Activated CD8-positive, alpha-beta T cell treated with anti-CD3 and anti-CD28 coated beads for 36 hours (primary cell): ENCODE measurements at regions of chr5 and their contacts with region 1.

Region 1: DNA sequence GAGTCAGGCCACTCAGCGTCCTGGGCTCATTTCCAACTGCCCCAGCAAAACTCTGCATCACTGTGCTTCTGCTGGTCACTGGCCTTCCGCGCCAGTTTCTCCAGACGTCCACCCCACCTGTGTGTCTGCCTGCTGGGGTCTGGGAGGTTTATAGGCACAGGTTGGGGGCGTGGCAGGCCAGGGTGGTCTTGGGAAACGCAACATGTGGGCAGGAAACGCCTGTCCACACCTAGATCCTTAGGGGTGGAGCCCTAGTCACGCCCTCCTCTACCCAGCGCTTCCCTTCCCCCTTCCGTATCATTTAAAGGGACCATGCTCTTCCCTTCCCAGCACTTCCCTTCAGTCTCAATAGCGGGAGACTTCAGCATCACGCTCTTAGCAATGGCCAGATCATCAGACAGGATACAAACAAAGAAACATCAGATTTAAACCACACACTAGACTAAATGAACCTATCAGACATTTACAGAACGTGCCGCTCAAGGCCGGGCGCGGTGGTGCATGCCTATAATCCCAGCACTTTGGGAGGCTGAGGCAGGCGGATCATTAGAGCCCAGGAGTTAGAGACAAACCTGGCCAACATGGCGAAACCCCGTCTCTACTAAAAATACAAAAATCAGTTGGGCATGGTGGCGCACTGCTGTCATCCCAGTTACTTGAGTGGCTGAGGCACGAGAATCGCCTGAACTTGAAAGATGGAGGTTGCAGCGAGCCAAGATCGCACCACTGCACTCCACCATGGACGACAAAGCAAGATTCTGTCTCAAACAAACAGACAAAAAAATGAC is 11.8 kb upstream of the BTNL9 start:
- DNase-seq: no peak
- ATAC-seq: no peak
- H3K4me3 Mint-ChIP-seq: no peak overlapping the region
- H3K27ac Mint-ChIP-seq: no peak overlapping the region
- H3K4me1 Mint-ChIP-seq: no peaks in the 10 kb centered on the region
- H3K27me3 Mint-ChIP-seq: peaks cover 29% of the 10 kb centered on the region
- CTCF ChIP-seq: no peak

Region 2: GRCh38 chr5:180873615-180874520 is 154.4 kb before region 1 on chr5:
- CTCF ChIA-PET with region 1: no interaction called
- POLR2A ChIA-PET with region 1: no interaction called
- intact Hi-C with region 1: loop called (anchors 10 kb)
- DNase-seq: peak; percentile 20
- ATAC-seq: peak; percentile 69
- H3K4me3 Mint-ChIP-seq: no peak overlapping the region
- H3K27ac Mint-ChIP-seq: no peak overlapping the region
- H3K4me1 Mint-ChIP-seq: peaks cover 4% of the 10 kb centered on the region
- H3K27me3 Mint-ChIP-seq: peaks cover 2% of the 10 kb centered on the region
- CTCF ChIP-seq: no peak